Prostate gland (tissue), 2 donors: ENCODE measurements at regions of chr1 and their contacts with region 1.

Region 1: DNA sequence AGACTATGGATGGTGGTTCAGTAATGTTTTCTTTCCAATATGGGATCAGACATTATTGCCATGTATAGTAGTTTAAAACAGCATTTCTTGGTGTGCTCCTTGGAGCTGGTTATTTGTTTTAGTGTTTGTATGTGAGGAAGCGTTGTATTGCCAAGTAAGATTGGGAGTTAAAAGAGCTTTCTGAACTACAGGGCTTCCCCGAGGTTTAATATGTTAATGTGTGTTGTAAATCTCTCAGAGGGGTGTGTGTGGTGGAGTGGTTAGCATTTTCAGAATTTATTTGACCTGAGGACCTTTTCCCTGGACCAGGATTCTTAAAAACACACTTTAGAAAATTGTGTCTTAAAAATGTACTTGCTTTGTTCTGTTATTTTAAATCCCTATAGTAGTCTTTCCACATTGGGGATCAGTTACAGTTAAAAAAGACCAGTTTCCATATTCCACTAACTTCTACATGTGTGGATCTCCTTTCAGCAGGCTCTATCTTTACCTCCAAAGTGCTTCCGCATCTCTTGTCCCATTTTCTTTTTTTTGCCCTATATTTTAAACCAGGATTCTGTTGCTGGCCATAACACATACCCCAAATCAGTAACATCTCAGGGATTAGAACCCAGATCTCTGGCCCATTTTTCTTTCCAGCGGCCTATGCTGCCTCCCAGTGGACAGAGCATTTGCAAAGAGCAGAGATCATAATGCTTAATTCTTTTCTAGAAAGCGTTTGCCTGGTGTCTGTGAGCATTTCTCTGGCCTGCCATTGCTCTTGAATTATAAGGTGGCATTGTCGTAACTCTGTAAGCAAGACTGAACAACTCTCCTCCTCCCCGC is 58.6 kb downstream of the PBX1 start:
- DNase-seq: no peak
- H3K4me3 ChIP-seq: no peak overlapping the region
- H3K27ac ChIP-seq: peak overlapping the region; percentile 24 to 31
- H3K4me1 ChIP-seq: no peaks in the 10 kb centered on the region
- H3K27me3 ChIP-seq: no peaks in the 10 kb centered on the region
- CTCF ChIP-seq: peak in 3 of 4 experiments; percentile 43 to 54 (median 53)
- POLR2A ChIP-seq: no peak

Region 2: GRCh38 chr1:164576291-164577271 is 41.0 kb before region 1 on chr1:
- intact Hi-C with region 1: loop called (anchors 5 kb)
- DNase-seq: no peak
- H3K4me3 ChIP-seq: peak overlapping the region in 1 of 2 donors; percentile 3
- H3K27ac ChIP-seq: peak overlapping the region; percentile 58 to 66
- H3K4me1 ChIP-seq: no peaks in the 10 kb centered on the region
- H3K27me3 ChIP-seq: no peaks in the 10 kb centered on the region
- CTCF ChIP-seq: no peak
- POLR2A ChIP-seq: no peak

Region 3: GRCh38 chr1:164726235-164726634 is 108.6 kb after region 1 on chr1:
- intact Hi-C with region 1: no loop called
- DNase-seq: no peak
- H3K4me3 ChIP-seq: no peak overlapping the region
- H3K27ac ChIP-seq: no peak overlapping the region
- H3K4me1 ChIP-seq: no peaks in the 10 kb centered on the region
- H3K27me3 ChIP-seq: no peaks in the 10 kb centered on the region
- CTCF ChIP-seq: no peak
- POLR2A ChIP-seq: no peak

Region 4: DNA sequence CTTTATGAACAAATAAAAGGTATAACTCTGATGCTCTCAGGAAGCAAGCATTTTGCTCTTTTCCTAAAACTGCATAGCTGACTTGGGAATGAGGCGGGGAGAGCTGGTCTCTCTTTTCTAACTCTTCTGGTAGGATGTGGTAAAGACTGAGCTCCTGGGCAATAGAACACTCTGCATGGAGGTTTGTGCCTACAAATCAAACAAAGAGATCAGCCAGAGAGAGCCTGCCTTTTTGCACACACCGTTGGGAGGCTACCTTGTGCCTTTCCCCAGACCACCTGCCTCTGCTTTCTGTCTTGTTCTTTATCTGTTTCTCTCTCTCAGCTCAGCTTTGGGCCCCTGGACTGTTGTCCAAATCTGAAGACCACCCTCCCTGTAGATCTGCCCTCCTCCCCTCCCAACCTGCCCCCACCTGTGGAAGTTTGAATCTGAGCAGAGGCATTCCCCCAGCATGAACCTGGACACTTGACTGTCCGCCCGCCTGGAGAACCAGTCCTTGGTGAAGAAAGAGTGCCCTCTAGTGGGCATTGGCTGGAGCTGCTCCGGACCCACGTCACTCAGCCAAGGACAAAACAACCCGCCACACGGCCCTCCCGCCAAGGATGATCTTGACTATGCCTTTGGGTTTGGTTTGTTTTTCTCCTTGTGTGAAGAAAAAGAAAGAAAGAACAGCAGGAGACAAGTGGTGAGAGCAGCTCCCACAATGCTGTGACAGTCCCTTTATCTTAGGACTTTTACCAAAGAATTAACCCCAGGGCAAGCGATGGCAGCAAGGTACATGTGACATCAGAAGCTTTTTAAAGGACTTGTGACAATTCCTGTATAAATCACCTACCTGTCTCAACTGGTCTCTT is 169.6 kb after region 1 on chr1:
- intact Hi-C with region 1: loop called (anchors 5 kb)
- DNase-seq: peak; percentile 89
- H3K4me3 ChIP-seq: no peak overlapping the region
- H3K27ac ChIP-seq: peak overlapping the region; percentile 48 to 51
- H3K4me1 ChIP-seq: peaks cover 18% of the 10 kb centered on the region
- H3K27me3 ChIP-seq: no peaks in the 10 kb centered on the region
- CTCF ChIP-seq: peak; percentile 87 to 95 (median 92)
- POLR2A ChIP-seq: no peak

Region 5: GRCh38 chr1:164914208-164914607 is 296.6 kb after region 1 on chr1:
- intact Hi-C with region 1: loop called (anchors 10 kb)
- DNase-seq: peak; percentile 24
- H3K4me3 ChIP-seq: no peak overlapping the region
- H3K27ac ChIP-seq: no peak overlapping the region
- H3K4me1 ChIP-seq: no peaks in the 10 kb centered on the region
- H3K27me3 ChIP-seq: no peaks in the 10 kb centered on the region
- CTCF ChIP-seq: peak in 2 of 4 experiments; percentile 53 to 58
- POLR2A ChIP-seq: no peak